Posterior vena cava (tissue), 2 donors: ENCODE measurements at regions of chr9 and their contacts with region 1.

Region 1: GRCh38 chr9:87805259-87805658 is 77.4 kb upstream of the SPATA31E1 start:
- DNase-seq: no peak

Region 2: DNA sequence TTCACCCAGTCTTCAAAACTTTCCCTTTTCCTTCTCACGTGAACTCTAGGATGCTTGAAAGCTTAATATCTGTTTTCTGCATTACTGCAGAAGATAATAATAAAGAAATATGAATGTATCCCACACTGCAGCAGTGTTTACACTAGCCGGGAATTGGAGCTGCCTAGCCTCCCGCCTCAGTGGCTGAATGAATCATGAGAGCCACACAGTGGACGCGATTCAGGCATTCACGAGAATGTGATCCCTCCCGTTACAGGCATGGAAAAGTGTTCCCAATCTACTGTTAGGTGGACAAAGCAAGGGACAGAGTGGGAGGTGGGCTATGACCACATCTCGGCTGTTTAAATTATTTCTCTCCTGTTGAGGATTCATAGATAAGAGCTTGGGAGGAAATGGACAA is 148.8 kb before region 1 on chr9:
- intact Hi-C with region 1: no loop called
- DNase-seq: no peak

Region 3: GRCh38 chr9:87678650-87679515 is 126.4 kb before region 1 on chr9:
- intact Hi-C with region 1: loop called (anchors 5 to 10 kb)
- DNase-seq: no peak

Region 4: DNA sequence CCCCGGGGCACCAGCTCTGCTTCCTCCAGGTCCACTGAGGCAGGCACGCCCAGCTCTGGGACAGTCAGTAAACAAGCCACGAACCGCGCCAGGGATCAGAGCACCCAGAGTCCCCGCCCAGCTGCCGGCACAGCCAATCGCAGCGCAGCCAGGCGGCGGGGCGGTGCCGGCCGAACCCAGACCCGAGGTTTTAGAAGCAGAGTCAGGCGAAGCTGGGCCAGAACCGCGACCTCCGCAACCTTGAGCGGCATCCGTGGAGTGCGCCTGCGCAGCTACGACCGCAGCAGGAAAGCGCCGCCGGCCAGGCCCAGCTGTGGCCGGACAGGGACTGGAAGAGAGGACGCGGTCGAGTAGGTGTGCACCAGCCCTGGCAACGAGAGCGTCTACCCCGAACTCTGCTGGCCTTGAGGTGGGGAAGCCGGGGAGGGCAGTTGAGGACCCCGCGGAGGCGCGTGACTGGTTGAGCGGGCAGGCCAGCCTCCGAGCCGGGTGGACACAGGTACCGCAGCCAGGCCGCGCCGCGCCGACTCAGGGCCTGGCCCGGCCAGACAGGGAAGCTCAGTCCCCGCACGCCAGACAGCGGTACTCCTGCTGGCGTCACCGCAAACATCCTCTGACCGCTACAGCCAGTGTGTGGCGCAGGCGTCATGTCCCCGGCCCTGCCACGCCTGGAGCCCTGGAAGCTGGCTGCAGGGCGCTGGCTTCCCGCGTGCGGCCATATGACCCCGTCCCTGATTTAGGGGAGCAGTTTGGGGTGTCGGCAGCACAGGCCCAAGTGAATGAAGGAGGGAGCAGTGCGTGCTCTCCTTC is 79.2 kb before region 1 on chr9 and contains the start of gene CTSL:
- intact Hi-C with region 1: no loop called
- DNase-seq: peak; percentile 99
- total RNA-seq, gene CTSL: 176 to 195 TPM

Region 5: DNA sequence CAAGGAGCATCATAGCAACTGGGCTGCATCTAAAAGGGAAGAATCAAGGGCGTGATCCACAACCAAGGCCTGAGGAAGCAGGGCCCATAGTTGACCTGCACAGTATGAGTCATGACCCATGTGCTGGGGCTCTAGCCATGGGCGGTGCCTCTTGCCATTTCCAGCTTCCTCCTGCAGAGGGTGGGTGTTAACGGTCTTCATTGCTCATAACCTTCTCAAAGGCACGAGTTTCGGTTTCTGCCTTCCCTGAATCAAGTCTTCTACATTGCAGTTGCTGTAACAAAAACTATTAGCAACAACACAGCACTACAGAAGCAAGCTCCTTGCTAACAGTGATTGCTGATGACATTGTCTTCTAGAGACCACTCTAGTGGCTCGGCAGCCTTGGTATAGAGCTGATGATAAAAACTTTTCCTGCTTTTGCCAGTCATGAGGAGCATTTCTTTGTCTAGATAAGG is 12.4 kb before region 1 on chr9:
- intact Hi-C with region 1: no loop called
- DNase-seq: peak; percentile 95